Activated CD4-positive, alpha-beta memory T cell treated with anti-CD3 and anti-CD28 coated beads, Interleukin-2, amount 10 ng/mL, durations not matched to agents 7 days and 5 days (primary cell): ENCODE measurements at regions of chr5 and their contacts with region 1.

Region 1: DNA sequence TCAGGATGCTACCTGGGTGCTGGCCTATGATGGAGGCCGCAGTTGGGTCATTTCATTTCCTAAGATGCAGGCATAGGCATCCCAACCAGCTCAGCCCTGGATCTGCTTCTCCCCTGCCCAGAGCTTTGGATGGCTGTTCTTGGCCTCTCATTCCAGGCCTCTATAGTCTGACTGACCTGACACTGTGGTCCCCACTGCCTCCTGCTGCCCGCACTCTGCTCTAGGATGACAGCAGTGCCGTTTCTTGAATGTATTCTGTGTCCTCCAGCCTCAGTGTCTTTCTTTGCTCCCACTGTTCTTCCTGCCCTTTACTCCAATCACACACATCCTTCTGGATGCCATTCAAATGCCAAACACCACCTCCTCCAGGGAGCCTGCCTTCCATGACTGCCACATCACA is 235.7 kb downstream of the HSPA4 start:
- DNase-seq: no peak
- H3K4me3 Mint-ChIP-seq: no peak overlapping the region
- H3K27ac Mint-ChIP-seq: no peak overlapping the region
- H3K4me1 Mint-ChIP-seq: no peaks in the 10 kb centered on the region
- H3K27me3 Mint-ChIP-seq: no peaks in the 10 kb centered on the region

Region 2: GRCh38 chr5:133111299-133111698 is 176.2 kb before region 1 on chr5:
- CTCF ChIA-PET with region 1: interaction called, 15 read pairs
- POLR2A ChIA-PET with region 1: no interaction called
- DNase-seq: peak; percentile 79
- H3K4me3 Mint-ChIP-seq: no peak overlapping the region
- H3K27ac Mint-ChIP-seq: no peak overlapping the region
- H3K4me1 Mint-ChIP-seq: peaks cover 14% of the 10 kb centered on the region
- H3K27me3 Mint-ChIP-seq: peaks cover 7% of the 10 kb centered on the region

Region 3: DNA sequence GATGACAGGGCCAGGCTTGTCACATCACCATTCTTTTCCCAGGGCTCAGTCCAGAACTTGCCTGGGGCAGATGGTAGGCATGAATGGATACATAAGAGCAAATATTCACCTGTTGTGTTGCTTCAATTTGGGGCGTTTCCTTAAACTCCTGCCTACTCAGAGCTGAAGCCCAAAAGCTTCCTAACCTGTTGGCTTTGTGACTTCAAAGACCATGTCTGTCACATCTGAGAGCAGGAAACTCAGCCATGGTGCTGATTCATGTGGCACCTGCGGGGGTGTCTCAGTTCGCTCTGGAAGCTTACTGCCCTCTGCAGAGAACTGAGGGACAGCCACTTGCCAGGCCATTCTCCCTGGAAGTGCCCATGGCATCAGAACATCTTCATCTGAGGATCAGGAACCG is 10.9 kb after region 1 on chr5:
- CTCF ChIA-PET with region 1: no interaction called
- POLR2A ChIA-PET with region 1: no interaction called
- DNase-seq: no peak
- H3K4me3 Mint-ChIP-seq: no peak overlapping the region
- H3K27ac Mint-ChIP-seq: no peak overlapping the region
- H3K4me1 Mint-ChIP-seq: no peaks in the 10 kb centered on the region
- H3K27me3 Mint-ChIP-seq: no peaks in the 10 kb centered on the region